ENCODE measurements at regions of chr1 and their contacts with region 1.

Region 1: DNA sequence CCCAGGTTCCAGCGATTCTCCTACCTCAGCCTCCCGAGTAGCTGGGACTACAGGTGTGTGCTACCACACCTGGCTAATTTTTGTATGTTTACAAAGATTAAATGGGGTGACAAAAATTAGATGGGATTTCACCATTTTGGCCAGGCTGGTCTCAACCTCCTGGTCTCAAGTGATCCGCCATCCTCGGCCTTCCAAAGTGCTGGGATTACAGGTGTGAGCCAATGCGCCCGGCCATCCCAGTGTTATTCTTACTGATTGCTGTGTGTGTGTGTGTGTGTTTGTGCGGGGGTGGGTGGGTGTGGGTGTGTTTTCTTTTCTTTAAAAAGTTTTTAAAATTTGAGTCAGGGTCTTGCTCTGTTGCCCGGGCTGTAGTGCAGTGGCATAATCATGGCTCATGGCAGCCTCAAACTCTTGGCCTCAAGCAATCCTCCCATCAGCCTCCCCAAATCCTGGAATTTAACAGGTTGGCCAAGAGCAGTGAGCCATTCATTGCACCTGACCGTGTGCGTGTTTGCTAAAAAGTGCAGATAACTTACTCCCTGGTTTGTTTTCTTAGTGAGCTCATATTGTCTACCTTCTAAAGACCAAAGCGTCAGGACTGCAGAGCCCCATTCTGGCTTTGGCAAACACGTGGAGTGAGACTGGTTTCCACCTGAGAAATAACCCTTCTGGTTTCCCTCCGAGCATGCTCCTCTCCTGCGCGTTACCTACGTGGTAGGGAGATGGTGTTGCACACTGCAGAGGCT is 32.4 kb upstream of the CA6 start:
- DNase-seq: no peak

Region 2: DNA sequence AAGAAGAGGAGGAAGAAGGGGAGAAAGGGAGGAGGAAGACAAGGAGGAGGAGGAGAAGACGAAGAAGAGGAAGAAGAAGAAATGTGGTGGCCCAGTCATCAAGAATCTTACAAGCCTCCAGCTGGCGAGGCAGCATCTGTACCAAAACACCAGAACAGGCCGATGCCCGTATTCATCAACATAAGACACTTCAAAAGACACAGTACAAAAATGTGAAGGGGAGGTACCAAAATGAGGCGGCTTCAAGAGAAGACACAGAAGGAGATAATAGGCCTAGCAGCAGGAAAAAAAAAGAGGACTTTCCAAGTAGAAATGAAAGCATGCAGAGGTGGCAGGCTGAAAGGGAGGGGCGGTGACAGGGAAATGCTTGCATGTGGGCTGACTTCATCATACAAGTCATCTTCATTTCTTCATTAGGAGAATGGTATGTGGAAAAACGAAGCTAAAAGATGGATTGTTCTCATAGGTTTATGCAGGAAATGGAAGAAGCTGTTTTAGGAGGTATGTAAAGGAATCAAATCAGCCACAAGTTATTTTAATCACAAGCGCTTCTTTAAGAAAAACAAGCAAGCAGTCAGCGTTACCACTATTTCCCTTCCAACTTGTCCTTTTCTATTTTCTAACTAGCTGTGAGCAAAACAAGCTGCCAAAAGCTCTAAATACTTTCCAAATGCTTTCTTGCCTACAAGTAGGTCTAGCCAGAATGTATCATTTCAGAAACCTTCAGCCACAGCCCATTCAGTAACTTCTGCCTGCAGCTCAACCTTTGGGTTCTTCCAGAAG is 403.1 kb before region 1 on chr1:
- intact Hi-C with region 1: no loop called
- DNase-seq: peak in 6 of 10 donors; percentile 16 to 88 (median 64)

Region 3: DNA sequence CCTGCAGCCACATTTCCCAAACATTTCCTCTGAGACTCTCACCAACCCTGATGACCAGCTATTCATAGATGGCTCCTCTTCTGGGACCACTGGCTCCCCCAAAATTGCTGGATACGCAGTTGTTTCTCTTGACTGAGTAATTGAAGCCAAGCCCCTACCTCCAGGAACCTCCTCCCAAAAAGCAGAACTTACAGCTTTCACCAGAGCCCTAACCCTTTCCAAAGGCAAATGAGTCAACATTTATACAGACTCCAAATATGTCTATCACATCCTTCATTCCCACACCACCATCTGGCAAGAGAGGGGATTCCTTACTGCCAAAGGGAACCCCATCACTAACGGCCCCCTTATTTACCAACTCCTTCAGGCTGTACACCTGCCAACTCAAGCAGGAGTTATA is 12.1 kb after region 1 on chr1:
- intact Hi-C with region 1: no loop called
- DNase-seq: no peak

Region 4: DNA sequence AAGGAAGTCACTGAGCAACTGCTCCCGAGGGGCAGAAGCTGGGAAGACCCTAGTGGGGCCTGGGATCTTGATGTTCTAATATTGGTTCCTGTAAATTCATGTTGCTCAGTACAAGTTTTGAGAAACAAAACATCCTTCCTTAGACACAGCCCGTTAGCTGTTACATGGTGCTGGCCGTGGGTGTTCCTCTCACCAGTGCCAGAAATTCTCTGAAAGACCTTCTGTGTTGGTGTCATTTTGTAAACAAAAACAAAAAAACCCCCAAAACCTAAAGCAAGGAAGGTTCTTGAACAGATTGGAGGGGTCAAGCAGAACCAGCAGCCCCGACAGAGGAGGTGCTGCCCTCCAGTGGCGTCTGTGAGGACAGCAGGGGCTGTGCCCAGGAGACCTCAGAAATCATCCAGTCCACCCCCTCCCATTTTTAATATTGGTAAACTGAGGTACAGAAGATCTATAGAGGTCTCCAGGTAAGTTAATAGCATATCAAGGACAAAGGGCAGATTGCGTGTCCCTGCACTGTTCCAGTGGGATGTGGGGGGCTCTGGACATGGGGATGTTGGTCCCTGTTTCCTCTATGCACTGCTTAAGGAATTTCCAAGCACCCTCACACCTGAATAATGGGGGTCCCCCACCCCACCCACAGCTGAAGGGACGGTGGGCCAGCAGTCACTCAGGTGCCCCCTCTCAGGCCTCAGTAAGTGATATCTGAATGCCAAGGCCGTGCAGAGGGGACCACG is 74.8 kb after region 1 on chr1:
- intact Hi-C with region 1: loop called (anchors 1 kb)
- DNase-seq: peak; percentile 55 to 96 (median 78)

Region 5: GRCh38 chr1:9004700-9005394 is 91.6 kb after region 1 on chr1:
- intact Hi-C with region 1: loop called (anchors 5 kb)
- DNase-seq: peak; percentile 37 to 97 (median 75)

Region 6: DNA sequence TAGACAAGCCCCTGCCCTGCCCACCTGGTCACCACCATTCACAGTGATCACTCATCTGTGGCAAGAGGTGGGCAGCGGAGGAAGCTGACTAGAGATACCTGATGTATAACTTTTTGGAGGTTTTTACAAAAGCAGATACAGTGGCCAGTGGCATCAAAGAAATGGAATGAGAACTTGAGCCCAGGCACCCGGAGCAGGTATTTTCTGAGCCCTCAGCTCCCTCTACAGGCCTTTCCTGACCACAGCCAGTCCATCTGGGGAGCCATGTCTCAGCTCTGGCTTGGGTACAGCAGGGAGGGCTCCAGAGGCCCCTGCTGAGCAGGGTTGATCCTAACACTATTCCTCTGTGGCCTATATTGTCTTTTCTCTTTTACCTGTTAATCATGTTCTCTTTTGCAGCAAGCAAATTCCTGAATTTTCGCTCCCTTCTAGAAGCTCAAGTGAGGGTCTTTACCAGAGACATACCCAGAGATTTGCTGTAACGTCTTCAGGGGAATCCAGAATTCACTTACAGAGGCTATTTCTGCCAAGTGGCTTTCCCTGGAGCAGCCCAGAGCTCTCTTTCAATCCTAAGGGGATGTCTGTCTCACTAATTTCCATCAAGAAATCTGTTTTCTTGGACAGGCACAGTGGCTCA is 188.3 kb after region 1 on chr1:
- intact Hi-C with region 1: loop called (anchors 1 kb)
- DNase-seq: peak in 6 of 10 donors; percentile 20 to 90 (median 34)

Measured in posterior cingulate gyrus (tissue), 11 donors.